ENCODE measurements at regions of chr13 and their contacts with region 1.

Region 1: DNA sequence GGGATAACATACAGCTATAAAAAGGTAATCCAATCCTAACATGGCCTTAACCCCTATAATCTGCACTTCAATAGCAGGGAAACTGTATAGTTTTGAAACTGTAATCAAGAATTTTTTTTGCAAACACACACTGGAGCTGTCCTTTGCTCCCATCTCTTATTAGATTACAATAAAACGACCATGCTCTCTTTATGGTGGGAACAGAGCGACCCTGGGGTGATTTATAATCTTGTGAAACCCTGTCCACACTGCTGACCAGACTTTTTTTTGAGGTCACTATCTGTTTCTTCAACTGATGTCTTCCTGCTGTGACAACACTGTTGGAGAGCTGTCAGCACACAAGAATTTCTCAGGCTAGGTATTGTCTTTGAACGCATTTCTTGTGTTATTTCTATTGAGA is 35.3 kb downstream of the DACH1 start:
- DNase-seq: no peak
- H3K4me3 Mint-ChIP-seq: no peak overlapping the region
- H3K27ac Mint-ChIP-seq: no peak overlapping the region
- H3K4me1 Mint-ChIP-seq: peaks cover 11% of the 10 kb centered on the region
- H3K27me3 Mint-ChIP-seq: peaks cover 1% of the 10 kb centered on the region

Region 2: GRCh38 chr13:71861769-71862458 is 30.2 kb after region 1 on chr13:
- CTCF ChIA-PET with region 1: no interaction called
- intact Hi-C with region 1: loop called (anchors 2 kb)
- DNase-seq: no peak
- H3K4me3 Mint-ChIP-seq: no peak overlapping the region
- H3K27ac Mint-ChIP-seq: no peak overlapping the region
- H3K4me1 Mint-ChIP-seq: peaks cover 15% of the 10 kb centered on the region
- H3K27me3 Mint-ChIP-seq: peaks cover 34% of the 10 kb centered on the region